OCI-LY7 (cell line): ENCODE measurements at regions of chr4 and their contacts with region 1.

Region 1: GRCh38 chr4:123452616-123453015 is 56.0 kb downstream of the SPRY1 start:
- DNase-seq: peak; percentile 26
- H3K4me3 ChIP-seq: no peak overlapping the region
- H3K27ac ChIP-seq: no peak overlapping the region
- H3K4me1 ChIP-seq: peaks cover 75% of the 10 kb centered on the region
- CTCF ChIP-seq: no peak

Region 2: GRCh38 chr4:123463869-123464268 is 11.3 kb after region 1 on chr4:
- CTCF ChIA-PET with region 1: no interaction called
- POLR2A ChIA-PET with region 1: interaction called, 10 read pairs
- intact Hi-C with region 1: no loop called
- DNase-seq: peak; percentile 85
- H3K4me3 ChIP-seq: peak overlapping the region; percentile 11
- H3K27ac ChIP-seq: peak overlapping the region; percentile 58
- H3K4me1 ChIP-seq: peaks cover 38% of the 10 kb centered on the region
- CTCF ChIP-seq: no peak